ENCODE measurements at regions of chr3 and their contacts with region 1.

Region 1: DNA sequence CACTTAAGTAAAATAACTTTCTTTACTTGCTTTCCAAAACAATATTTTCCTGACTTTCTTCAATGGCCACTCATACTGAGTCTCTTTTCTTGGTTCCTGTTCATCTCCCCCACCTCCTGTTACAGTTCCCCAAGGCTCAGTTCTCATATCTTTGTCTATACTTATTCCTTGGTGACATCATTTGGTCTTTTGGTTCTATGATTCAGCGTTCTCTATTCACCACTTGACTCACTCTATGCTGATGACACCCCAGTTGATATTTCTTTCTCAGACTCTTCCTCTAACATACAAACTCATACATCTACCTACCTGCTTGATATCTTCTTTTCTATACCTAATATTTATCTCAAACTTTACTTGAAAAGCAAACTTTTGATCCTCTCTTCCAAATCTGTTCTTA is 85.0 kb upstream of the P3H2 start:
- DNase-seq: peak; percentile 44
- H3K4me3 Mint-ChIP-seq: no peak overlapping the region
- H3K27ac Mint-ChIP-seq: peak overlapping the region; percentile 12
- H3K4me1 Mint-ChIP-seq: peaks cover 11% of the 10 kb centered on the region
- H3K27me3 Mint-ChIP-seq: no peaks in the 10 kb centered on the region
- CTCF ChIP-seq: no peak

Region 2: GRCh38 chr3:189967254-189967865 is 238.4 kb before region 1 on chr3:
- CTCF ChIA-PET with region 1: interaction called, 74 read pairs
- POLR2A ChIA-PET with region 1: interaction called, 4 read pairs
- intact Hi-C with region 1: loop called (anchors 1 kb)
- DNase-seq: peak; percentile 76
- H3K4me3 Mint-ChIP-seq: no peak overlapping the region
- H3K27ac Mint-ChIP-seq: no peak overlapping the region
- H3K4me1 Mint-ChIP-seq: no peaks in the 10 kb centered on the region
- H3K27me3 Mint-ChIP-seq: no peaks in the 10 kb centered on the region
- CTCF ChIP-seq: peak; percentile 72

Region 3: GRCh38 chr3:190017521-190018288 is 188.0 kb before region 1 on chr3:
- CTCF ChIA-PET with region 1: interaction called, 5 read pairs
- POLR2A ChIA-PET with region 1: no interaction called
- intact Hi-C with region 1: loop called (anchors 1 kb)
- DNase-seq: peak; percentile 78
- H3K4me3 Mint-ChIP-seq: no peak overlapping the region
- H3K27ac Mint-ChIP-seq: no peak overlapping the region
- H3K4me1 Mint-ChIP-seq: peaks cover 26% of the 10 kb centered on the region
- H3K27me3 Mint-ChIP-seq: no peaks in the 10 kb centered on the region
- CTCF ChIP-seq: peak; percentile 74

Region 4: DNA sequence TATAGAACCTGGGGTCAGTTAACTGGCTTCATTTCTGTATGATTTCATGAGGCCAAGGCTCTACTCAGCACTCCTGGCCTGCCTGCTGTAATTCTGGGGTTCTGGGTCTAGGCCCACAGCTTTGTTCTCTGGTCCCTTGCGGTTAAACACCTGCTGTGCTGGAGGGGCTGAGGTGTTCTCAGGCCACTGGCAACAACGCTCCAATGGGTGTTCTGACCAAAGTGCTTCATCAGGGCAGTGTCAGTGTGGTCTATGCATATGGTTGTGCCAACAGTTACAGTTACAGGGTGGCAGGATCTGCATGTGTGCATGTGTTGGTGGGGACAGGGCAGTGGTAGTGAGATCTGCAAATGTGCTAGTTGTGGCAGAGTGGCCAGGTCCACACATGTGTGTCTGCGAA is 720.9 kb after region 1 on chr3:
- CTCF ChIA-PET with region 1: no interaction called
- POLR2A ChIA-PET with region 1: no interaction called
- intact Hi-C with region 1: no loop called
- DNase-seq: no peak
- H3K4me3 Mint-ChIP-seq: no peak overlapping the region
- H3K27ac Mint-ChIP-seq: no peak overlapping the region
- H3K4me1 Mint-ChIP-seq: no peaks in the 10 kb centered on the region
- H3K27me3 Mint-ChIP-seq: no peaks in the 10 kb centered on the region
- CTCF ChIP-seq: no peak

Measured in MCF 10A (cell line).